Mammary epithelial cell (primary cell): ENCODE measurements at regions of chr14 and their contacts with region 1.

Region 1: DNA sequence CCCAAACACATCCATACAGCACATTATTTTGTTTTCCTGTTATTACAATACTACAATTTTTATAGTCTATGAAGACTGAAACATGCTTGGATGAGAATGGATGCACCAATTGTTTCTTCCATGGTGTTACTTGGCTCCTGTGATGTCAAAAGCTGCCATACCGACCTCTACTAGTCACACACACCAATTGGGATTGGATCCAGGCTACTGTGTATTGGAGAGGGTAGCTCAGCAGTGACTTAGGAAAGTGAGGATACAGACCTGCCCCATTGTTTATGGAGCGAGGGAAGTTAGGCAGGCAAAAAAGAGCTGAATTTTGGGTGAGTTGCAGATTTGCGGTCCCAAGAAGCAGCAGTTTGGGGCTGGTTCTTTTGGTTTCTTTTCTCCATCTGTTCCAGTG is 30.8 kb upstream of the AKAP6 start:
- DNase-seq: no peak
- H3K4me3 ChIP-seq: no peak overlapping the region
- H3K27ac ChIP-seq: no peak overlapping the region
- H3K4me1 ChIP-seq: no peaks in the 10 kb centered on the region
- H3K27me3 ChIP-seq: no peaks in the 10 kb centered on the region
- CTCF ChIP-seq: no peak

Region 2: GRCh38 chr14:32217301-32217700 is 81.0 kb before region 1 on chr14:
- CTCF ChIA-PET with region 1: no interaction called
- dilution Hi-C with region 1: no loop called
- in situ Hi-C with region 1: no loop called
- intact Hi-C with region 1: no loop called
- DNase-seq: no peak
- H3K4me3 ChIP-seq: no peak overlapping the region
- H3K27ac ChIP-seq: no peak overlapping the region
- H3K4me1 ChIP-seq: peaks cover 4% of the 10 kb centered on the region
- H3K27me3 ChIP-seq: no peaks in the 10 kb centered on the region
- CTCF ChIP-seq: no peak

Region 3: DNA sequence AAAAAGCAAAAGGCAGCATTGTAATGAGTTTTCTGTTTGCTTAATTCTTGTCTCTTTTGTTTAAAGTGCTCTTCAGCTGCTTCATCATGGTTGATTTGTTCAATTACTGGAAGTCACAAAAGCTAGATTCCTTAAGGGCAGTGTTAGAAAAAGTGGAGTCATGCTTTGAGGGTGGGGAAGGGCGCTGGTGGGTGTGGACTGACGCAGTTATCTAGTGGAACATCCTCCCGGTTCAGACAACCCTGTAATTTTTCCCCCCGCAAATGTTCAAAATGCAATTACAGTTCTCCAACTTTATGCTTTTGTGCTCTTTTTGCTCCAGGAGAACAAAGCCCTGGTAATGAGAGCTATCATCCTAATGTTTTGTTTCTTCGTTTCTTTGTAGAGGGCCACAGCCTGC is 32.9 kb after region 1 on chr14:
- CTCF ChIA-PET with region 1: no interaction called
- dilution Hi-C with region 1: loop called (anchors 5 kb)
- in situ Hi-C with region 1: no loop called
- intact Hi-C with region 1: no loop called
- DNase-seq: no peak
- H3K4me3 ChIP-seq: no peak overlapping the region
- H3K27ac ChIP-seq: no peak overlapping the region
- H3K4me1 ChIP-seq: peaks cover 8% of the 10 kb centered on the region
- H3K27me3 ChIP-seq: no peaks in the 10 kb centered on the region
- CTCF ChIP-seq: no peak

Region 4: GRCh38 chr14:32345311-32345791 is 47.0 kb after region 1 on chr14:
- CTCF ChIA-PET with region 1: no interaction called
- dilution Hi-C with region 1: no loop called
- in situ Hi-C with region 1: no loop called
- intact Hi-C with region 1: no loop called
- DNase-seq: peak; percentile 74
- H3K4me3 ChIP-seq: no peak overlapping the region
- H3K27ac ChIP-seq: peak overlapping the region; percentile 87
- H3K4me1 ChIP-seq: peaks cover 54% of the 10 kb centered on the region
- H3K27me3 ChIP-seq: no peaks in the 10 kb centered on the region
- CTCF ChIP-seq: peak in 1 of 2 donors; percentile 6